ENCODE measurements at regions of chr1 and their contacts with region 1.

Region 1: DNA sequence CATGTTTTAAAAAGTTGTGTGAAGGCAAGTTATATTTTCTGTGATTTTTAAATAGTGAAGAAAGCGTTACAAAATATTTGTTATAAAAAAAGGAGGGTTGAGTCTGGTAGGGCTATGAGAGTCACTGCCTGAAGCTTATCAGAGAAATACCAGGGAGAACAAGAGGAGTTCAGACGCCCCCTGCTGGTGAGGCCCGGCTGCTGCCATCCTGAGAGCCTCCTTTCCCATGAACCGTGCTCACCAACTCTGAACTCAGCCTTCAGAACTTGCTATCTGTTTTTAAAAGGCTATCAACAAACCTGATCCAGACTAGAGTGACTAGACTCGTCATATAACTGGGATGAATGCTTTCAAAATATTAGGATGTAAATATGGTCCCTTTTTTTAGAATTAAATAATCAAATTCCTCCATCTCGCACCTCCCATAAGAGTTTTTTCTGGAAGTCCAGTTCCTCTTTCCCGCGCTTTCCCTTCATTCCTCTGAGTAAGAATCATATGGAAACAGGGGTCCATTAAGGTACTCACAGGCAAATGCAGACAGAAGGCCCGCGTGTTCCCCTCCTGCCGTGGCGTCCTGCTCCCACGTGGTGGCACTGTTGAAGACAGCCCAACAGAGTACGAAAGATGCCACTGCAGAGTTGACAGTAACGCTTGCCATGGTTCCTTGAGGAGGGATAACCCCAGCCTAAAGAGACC is 26.2 kb upstream of the SPATA6 start:
- DNase-seq: peak; percentile 85
- H3K4me3 ChIP-seq: no peak overlapping the region
- H3K27ac ChIP-seq: no peak overlapping the region
- H3K4me1 ChIP-seq: peaks cover 4% of the 10 kb centered on the region
- H3K27me3 ChIP-seq: no peaks in the 10 kb centered on the region
- CTCF ChIP-seq: peak; percentile 83

Region 2: GRCh38 chr1:48190881-48191280 is 307.4 kb before region 1 on chr1:
- intact Hi-C with region 1: no loop called
- DNase-seq: no peak
- H3K4me3 ChIP-seq: no peak overlapping the region
- H3K27ac ChIP-seq: no peak overlapping the region
- H3K4me1 ChIP-seq: no peaks in the 10 kb centered on the region
- H3K27me3 ChIP-seq: no peaks in the 10 kb centered on the region
- CTCF ChIP-seq: no peak

Region 3: GRCh38 chr1:48356901-48357300 is 141.3 kb before region 1 on chr1:
- intact Hi-C with region 1: loop called (anchors 10 kb)
- DNase-seq: no peak
- H3K4me3 ChIP-seq: no peak overlapping the region
- H3K27ac ChIP-seq: no peak overlapping the region
- H3K4me1 ChIP-seq: no peaks in the 10 kb centered on the region
- H3K27me3 ChIP-seq: no peaks in the 10 kb centered on the region
- CTCF ChIP-seq: no peak

Region 4: DNA sequence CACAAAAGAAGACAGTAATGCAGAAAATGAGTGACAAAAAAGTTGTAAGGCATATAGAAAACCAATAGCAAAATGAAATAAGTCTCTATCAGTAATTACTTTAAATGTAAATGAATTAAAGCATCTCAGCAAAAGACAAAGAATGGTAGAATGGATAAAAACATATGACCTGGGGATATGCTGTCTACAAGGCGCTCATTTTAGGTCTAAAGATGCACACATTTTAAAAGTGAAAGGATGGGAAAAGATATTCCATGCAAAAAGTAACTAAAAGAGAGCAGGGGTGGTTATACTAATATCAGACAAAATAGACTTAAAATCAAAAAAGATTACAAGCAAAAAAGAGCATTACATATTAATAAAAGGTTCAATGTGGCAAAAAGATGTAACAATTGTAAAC is 67.4 kb before region 1 on chr1:
- intact Hi-C with region 1: no loop called
- DNase-seq: no peak
- H3K4me3 ChIP-seq: no peak overlapping the region
- H3K27ac ChIP-seq: no peak overlapping the region
- H3K4me1 ChIP-seq: no peaks in the 10 kb centered on the region
- H3K27me3 ChIP-seq: no peaks in the 10 kb centered on the region
- CTCF ChIP-seq: no peak

Measured in colonic mucosa (tissue), 4 donors.